Activated T-helper 2 cell treated with anti-CD3 and anti-CD28 coated beads, Interferon-gamma antibody, Interleukin-2, Interleukin-4, amounts not matched to agents 10 μg/mL and 5 μg/mL and 100 μg/mL, durations not matched to agents 14 hours and 24 hours and 36 hours (primary cell): ENCODE measurements at regions of chr12 and their contacts with region 1.

Region 1: DNA sequence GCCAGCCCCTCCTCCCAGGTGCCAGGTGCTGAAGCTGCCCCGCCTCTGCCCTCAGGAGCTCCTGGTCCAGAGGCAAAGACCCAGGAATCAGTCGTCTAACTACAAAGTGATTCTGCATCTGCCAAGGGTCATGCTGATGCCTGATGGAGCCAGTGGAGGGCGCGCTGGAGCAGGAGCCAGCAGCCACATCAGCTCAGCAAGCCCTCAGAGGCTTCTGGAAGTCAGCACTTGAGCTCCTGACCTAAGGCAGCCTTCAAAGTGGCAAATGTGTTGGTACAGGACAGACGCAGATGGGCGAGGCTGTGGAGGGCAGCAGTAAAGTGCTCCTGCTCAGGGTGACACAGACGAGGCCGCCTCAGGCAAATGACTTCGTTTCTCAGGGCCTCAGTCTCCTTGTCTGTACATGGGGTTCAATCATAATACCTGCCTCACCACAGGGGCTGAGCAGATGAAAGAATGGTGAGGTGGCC is 10.9 kb downstream of the C12orf43 start:
- DNase-seq: peak; percentile 41
- H3K4me3 Mint-ChIP-seq: no peak overlapping the region
- H3K27ac Mint-ChIP-seq: peak overlapping the region; percentile 25
- H3K4me1 Mint-ChIP-seq: peaks cover 3% of the 10 kb centered on the region
- H3K27me3 Mint-ChIP-seq: no peaks in the 10 kb centered on the region

Region 2: GRCh38 chr12:120849765-120850164 is 155.6 kb before region 1 on chr12:
- intact Hi-C with region 1: no loop called
- DNase-seq: no peak
- H3K4me3 Mint-ChIP-seq: no peak overlapping the region
- H3K27ac Mint-ChIP-seq: no peak overlapping the region
- H3K4me1 Mint-ChIP-seq: peaks cover 43% of the 10 kb centered on the region
- H3K27me3 Mint-ChIP-seq: no peaks in the 10 kb centered on the region

Region 3: DNA sequence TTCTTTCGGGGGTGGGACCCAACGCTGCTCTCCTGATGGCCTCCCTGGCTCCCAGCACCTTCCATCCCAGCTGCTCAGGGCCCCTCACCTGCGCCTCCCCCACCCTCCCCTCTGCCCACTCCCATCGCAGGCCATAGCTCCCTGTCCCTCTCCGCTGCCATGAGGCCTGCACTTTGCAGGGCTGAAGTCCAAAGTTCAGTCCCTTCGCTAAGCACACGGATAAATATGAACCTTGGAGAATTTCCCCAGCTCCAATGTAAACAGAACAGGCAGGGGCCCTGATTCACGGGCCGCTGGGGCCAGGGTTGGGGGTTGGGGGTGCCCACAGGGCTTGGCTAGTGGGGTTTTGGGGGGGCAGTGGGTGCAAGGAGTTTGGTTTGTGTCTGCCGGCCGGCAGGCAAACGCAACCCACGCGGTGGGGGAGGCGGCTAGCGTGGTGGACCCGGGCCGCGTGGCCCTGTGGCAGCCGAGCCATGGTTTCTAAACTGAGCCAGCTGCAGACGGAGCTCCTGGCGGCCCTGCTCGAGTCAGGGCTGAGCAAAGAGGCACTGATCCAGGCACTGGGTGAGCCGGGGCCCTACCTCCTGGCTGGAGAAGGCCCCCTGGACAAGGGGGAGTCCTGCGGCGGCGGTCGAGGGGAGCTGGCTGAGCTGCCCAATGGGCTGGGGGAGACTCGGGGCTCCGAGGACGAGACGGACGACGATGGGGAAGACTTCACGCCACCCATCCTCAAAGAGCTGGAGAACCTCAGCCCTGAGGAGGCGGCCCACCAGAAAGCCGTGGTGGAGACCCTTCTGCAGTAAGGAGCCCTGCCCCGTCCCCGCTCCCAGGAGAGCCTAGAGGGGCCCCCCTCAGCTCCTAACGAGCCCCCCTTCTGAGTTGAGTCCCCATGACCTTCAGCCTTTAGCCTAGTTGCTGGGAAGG is 26.8 kb before region 1 on chr12 and contains the start of gene HNF1A:
- intact Hi-C with region 1: no loop called
- DNase-seq: no peak
- H3K4me3 Mint-ChIP-seq: no peak within 1 kb of the TSS
- H3K27ac Mint-ChIP-seq: no peak within 1 kb of the TSS
- H3K4me1 Mint-ChIP-seq: no peaks in the 10 kb centered on the region
- H3K27me3 Mint-ChIP-seq: no peaks in the 10 kb centered on the region
- total RNA-seq, gene HNF1A: not detected in 2 replicates

Region 4: DNA sequence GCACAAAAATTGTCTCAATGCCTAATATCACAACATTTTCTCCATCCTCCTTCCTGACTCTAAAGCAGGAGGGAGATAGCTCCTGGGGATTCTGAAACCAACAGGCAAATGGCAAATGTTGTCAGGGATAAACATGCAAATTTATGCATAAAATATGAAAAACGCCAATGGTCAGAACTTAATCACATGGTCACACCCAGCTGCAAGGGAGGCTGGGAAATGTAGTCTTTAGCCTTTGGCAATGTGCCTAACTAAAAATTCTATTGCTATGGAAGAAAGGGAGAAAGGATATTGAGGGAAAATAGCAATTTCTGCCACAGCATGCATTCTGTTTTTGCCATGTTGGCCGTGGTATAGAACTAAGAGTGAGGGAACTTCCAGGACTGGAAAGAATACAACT is 45.3 kb after region 1 on chr12:
- intact Hi-C with region 1: no loop called
- DNase-seq: no peak
- H3K4me3 Mint-ChIP-seq: no peak overlapping the region
- H3K27ac Mint-ChIP-seq: no peak overlapping the region
- H3K4me1 Mint-ChIP-seq: peaks cover 3% of the 10 kb centered on the region
- H3K27me3 Mint-ChIP-seq: peaks cover 10% of the 10 kb centered on the region

Region 5: DNA sequence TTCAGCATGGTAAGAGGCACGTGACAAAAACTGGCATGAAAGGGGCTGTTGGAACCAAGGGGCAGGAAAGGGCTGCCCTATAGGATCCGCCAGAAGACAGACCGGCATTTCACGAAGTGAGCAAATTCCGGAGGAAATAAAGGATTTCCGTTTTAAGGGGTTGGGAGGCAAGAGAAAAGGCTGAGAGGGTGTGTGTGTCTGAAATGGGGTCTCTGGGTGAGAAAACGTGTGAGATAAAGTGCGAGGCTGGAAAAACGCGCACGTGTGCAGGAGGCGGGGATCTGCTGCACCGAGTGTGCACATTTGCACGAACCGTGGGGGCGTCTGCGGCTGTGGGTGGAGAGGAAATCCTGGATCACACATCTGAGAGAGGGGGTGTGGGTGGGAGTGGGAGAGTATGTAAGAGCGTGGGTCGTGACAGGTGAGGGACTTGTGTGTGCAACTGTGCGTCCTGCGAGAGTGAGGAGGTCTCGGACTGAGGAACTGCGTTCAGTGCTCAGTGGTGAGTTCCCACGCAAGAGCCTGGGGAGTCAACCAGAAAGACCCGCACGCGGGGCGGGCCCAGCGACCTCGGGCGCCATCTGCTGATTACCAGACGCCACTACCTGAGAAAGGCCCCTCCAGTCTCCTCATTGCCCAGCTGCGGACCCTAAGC is 90.3 kb after region 1 on chr12:
- intact Hi-C with region 1: loop called (anchors 5 kb)
- DNase-seq: peak; percentile 70
- H3K4me3 Mint-ChIP-seq: peak overlapping the region; percentile 78
- H3K27ac Mint-ChIP-seq: peak overlapping the region; percentile 63
- H3K4me1 Mint-ChIP-seq: peaks cover 28% of the 10 kb centered on the region
- H3K27me3 Mint-ChIP-seq: peaks cover 7% of the 10 kb centered on the region

Region 6: DNA sequence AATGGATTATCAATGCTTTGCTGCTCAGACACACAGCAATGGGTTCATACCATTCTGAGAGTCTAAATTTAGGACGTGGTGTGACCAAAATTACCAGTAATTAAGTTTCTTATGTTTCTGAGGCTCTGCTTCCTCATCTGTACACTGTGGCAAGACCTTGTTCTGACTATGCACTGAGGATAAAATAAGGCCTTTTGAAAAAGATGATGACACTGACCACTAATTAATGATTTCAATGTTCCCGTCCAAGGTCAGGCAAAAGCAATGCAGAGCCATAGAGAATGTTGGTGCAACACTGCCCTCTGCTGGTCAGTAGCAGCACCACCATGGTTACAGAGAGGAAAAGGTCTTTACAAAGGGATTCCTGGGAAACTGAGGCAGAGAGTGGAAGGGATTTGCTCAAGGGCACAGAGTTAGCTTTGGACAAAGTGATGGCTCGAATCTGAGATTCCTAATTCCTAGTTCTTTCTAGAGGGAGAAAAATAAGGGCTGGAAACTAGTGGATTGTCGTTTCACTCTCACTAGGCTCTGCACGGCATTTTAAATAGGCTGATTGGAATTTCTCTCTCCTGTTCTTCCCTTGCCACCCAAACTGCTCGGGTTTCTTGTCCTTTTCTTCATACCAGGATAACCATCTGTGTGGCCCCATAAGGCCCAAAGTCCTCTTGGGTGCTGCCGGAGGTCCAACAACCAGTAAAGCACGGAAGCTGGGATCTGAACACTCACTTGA is 105.0 kb after region 1 on chr12:
- intact Hi-C with region 1: loop called (anchors 1 kb)
- DNase-seq: peak; percentile 47
- H3K4me3 Mint-ChIP-seq: no peak overlapping the region
- H3K27ac Mint-ChIP-seq: no peak overlapping the region
- H3K4me1 Mint-ChIP-seq: peaks cover 3% of the 10 kb centered on the region
- H3K27me3 Mint-ChIP-seq: no peaks in the 10 kb centered on the region

Region 7: GRCh38 chr12:121678716-121679580 is 673.6 kb after region 1 on chr12:
- intact Hi-C with region 1: no loop called
- DNase-seq: no peak
- H3K4me3 Mint-ChIP-seq: no peak overlapping the region
- H3K27ac Mint-ChIP-seq: no peak overlapping the region
- H3K4me1 Mint-ChIP-seq: peaks cover 2% of the 10 kb centered on the region
- H3K27me3 Mint-ChIP-seq: no peaks in the 10 kb centered on the region